Pancreas (tissue), 10 donors: ENCODE measurements at regions of chr5 and their contacts with region 1.

Region 1: DNA sequence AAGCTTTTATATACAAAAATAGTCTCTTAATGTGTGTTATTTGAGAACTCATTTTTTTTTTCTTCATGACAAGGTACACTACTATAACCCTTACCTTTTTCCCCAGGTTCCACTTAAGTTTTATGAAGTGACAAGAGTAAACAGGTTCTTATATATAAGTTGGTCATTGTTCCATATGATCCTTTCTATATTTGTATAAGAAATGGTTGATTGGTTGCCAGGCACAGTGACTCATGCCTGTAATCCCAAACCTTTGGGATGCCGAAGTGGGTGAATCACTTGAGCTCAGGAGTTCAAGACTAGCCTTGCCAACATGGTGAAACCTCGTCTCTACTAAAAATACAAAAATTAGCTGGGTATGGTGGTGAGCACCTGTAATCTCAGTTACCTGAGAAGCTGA is 108.3 kb downstream of the PCSK1 start:
- DNase-seq: no peak
- ATAC-seq: no peak
- H3K4me3 ChIP-seq: no peak overlapping the region
- H3K27ac ChIP-seq: no peak overlapping the region
- H3K4me1 ChIP-seq: no peaks in the 10 kb centered on the region
- H3K27me3 ChIP-seq: no peaks in the 10 kb centered on the region
- CTCF ChIP-seq: no peak

Region 2: GRCh38 chr5:95870105-95870672 is 454.5 kb before region 1 on chr5:
- intact Hi-C with region 1: loop called in 1 of 3 experiments (anchors 10 kb)
- DNase-seq: no peak
- ATAC-seq: peak in 3 of 4 donors; percentile 18 to 69 (median 65)
- H3K4me3 ChIP-seq: no peak overlapping the region
- H3K27ac ChIP-seq: peak overlapping the region in 2 of 4 donors; percentile 2 to 25
- H3K4me1 ChIP-seq: no peaks in the 10 kb centered on the region
- H3K27me3 ChIP-seq: no peaks in the 10 kb centered on the region
- CTCF ChIP-seq: no peak

Region 3: GRCh38 chr5:96226941-96227552 is 97.7 kb before region 1 on chr5:
- intact Hi-C with region 1: no loop called
- DNase-seq: no peak
- ATAC-seq: peak in 2 of 4 donors; percentile 62 to 66
- H3K4me3 ChIP-seq: no peak overlapping the region
- H3K27ac ChIP-seq: no peak overlapping the region
- H3K4me1 ChIP-seq: no peaks in the 10 kb centered on the region
- H3K27me3 ChIP-seq: no peaks in the 10 kb centered on the region
- CTCF ChIP-seq: no peak